ENCODE measurements at regions of chr10 and their contacts with region 1.

Region 1: DNA sequence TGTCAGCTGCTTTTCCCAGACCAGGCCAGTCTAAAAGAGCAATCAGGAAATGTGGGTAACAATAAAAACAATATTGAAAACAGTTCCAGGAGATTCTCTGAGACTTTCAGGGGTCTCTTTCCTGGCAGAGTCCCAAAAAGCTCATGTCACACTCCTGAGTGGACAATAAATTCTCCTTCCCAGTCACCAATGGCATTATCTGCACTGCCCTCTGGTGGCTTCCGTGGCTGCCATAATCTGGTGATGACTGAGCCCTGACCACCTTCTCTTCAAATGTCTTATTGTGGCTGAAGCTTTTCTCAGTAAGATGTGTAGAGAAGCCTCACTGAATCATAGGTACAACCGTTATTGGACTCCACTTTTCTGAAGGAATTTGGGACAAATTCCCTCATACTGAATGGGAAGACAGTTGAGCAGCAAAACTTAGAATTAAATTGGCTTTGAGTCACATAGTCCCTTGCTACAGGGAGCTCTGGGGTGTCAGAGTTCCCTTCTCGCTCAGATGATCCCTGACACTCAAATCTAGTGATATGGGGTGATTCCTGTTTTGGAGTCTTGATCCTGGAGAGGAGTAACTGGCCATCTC is 24.4 kb upstream of the ASAH2 start:
- DNase-seq: peak; percentile 53
- ATAC-seq: no peak
- H3K4me3 Mint-ChIP-seq: no peak overlapping the region
- H3K27ac Mint-ChIP-seq: no peak overlapping the region
- H3K4me1 Mint-ChIP-seq: no peaks in the 10 kb centered on the region
- H3K27me3 Mint-ChIP-seq: peaks cover 38% of the 10 kb centered on the region

Region 2: DNA sequence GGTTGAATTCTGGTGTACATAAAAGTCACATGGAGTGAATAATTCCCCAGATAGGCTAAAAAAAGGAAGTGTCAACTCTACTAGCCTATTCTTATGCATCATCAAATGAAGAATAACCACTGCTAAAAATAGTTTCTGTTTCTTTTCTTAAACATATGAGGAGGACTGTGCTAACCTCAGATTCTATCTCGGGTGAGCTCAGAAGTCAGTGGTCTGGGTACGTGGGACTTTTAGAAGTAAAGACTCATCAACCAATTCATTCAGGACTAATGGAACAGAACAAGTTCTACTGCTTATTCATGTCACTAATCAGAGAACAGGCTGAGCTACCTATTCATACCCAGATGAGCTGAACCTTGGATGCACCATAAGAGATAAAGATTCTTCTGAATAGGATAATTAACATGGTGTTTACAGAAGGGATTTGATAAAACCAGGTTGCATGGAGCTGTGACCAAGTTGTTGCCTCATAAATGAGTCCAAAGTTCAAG is 14.9 kb before region 1 on chr10:
- CTCF ChIA-PET with region 1: interaction called, 15 read pairs
- POLR2A ChIA-PET with region 1: no interaction called
- DNase-seq: peak; percentile 53
- ATAC-seq: peak; percentile 91
- H3K4me3 Mint-ChIP-seq: no peak overlapping the region
- H3K27ac Mint-ChIP-seq: no peak overlapping the region
- H3K4me1 Mint-ChIP-seq: peaks cover 25% of the 10 kb centered on the region
- H3K27me3 Mint-ChIP-seq: peaks cover 30% of the 10 kb centered on the region

Measured in activated CD8-positive, alpha-beta T cell treated with anti-CD3 and anti-CD28 coated beads, Interleukin-2, amount 10 ng/mL, durations not matched to agents 7 days and 5 days (primary cell).